ENCODE measurements at regions of chr3 and their contacts with region 1.

Region 1: DNA sequence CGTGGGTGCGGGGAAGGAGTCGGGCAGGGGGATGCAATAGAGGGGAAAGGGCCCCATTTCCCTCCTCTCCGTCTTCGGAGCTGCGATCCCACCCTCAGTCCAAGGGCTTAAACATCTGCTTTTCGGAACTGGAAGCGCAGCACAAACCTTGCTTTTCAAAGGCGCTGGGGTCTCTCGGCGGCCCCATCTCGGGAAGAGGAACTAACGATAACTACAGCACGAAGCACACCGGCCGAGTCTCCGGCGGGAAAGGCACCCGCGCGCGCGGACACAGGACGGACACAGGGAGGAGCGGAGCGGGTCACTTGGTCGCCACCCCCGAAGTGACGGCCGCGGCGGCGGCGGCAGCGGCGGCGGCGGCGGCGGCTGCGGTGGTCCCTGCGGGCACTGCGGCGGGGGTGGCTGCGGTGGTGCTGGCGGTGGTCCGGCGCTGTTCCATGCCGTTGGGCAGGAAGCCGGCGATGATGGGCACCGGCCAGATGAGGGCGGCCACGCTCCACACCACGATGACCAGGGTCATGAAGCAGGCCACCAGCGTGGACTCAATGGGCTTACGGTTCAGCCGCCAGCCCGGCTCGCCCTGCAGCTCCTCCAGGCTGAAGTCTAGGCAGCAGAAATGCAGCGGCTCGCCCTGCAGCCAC is 1.1 kb downstream of the TMEM158 start:
- DNase-seq: peak; percentile 75 to 89 (median 78)
- ATAC-seq: peak; percentile 84
- H3K4me3 ChIP-seq: peak overlapping the region; percentile 65
- H3K27ac ChIP-seq: peak overlapping the region; percentile 43; the same call in 2 of the 3 replicates
- H3K4me1 ChIP-seq: peaks cover 18 to 19% of the 10 kb centered on the region in 2 experiments; a peak in 4 of 5 replicates
- H3K27me3 ChIP-seq: peaks cover 9 to 23% of the 10 kb centered on the region in 2 experiments; a peak in 4 of 5 replicates
- CTCF ChIP-seq: peak; percentile 68 to 89 (median 89)
- EP300 ChIP-seq: no peak
- POLR2A ChIP-seq: no peak
- RAD21 ChIP-seq: peak; percentile 94 to 96

Region 2: GRCh38 chr3:45055411-45056143 is 169.4 kb before region 1 on chr3:
- CTCF ChIA-PET with region 1: no interaction called
- POLR2A ChIA-PET with region 1: no interaction called
- in situ Hi-C with region 1: no loop called
- intact Hi-C with region 1: no loop called
- DNase-seq: peak; percentile 58 to 89 (median 68)
- ATAC-seq: peak; percentile 82
- H3K4me3 ChIP-seq: no peak overlapping the region
- H3K27ac ChIP-seq: peak overlapping the region; percentile 32; the same call in 2 of the 3 replicates
- H3K4me1 ChIP-seq: peaks cover 21 to 74% of the 10 kb centered on the region in 2 experiments
- H3K27me3 ChIP-seq: no peaks in the 10 kb centered on the region
- CTCF ChIP-seq: peak; percentile 64 to 82 (median 73); a peak in 5 of 6 replicates
- EP300 ChIP-seq: no peak
- POLR2A ChIP-seq: no peak
- RAD21 ChIP-seq: peak; percentile 72 to 79

Region 3: GRCh38 chr3:45273681-45274515 is 49.0 kb after region 1 on chr3:
- CTCF ChIA-PET with region 1: no interaction called
- POLR2A ChIA-PET with region 1: interaction called, 4 read pairs
- in situ Hi-C with region 1: no loop called
- intact Hi-C with region 1: loop called (anchors 5 kb)
- DNase-seq: peak; percentile 79 to 96 (median 84)
- ATAC-seq: peak; percentile 93
- H3K4me3 ChIP-seq: no peak overlapping the region
- H3K27ac ChIP-seq: peak overlapping the region; percentile 93
- H3K4me1 ChIP-seq: peaks cover 25 to 50% of the 10 kb centered on the region in 2 experiments
- H3K27me3 ChIP-seq: no peaks in the 10 kb centered on the region
- CTCF ChIP-seq: peak in 1 of 3 experiments; percentile 9; a peak in 1 of 6 replicates
- EP300 ChIP-seq: peak; percentile 96
- POLR2A ChIP-seq: peak; percentile 68; the same call in 1 of the 2 replicates
- RAD21 ChIP-seq: peak; percentile 6 to 40; a peak in 2 of 4 replicates

Region 4: DNA sequence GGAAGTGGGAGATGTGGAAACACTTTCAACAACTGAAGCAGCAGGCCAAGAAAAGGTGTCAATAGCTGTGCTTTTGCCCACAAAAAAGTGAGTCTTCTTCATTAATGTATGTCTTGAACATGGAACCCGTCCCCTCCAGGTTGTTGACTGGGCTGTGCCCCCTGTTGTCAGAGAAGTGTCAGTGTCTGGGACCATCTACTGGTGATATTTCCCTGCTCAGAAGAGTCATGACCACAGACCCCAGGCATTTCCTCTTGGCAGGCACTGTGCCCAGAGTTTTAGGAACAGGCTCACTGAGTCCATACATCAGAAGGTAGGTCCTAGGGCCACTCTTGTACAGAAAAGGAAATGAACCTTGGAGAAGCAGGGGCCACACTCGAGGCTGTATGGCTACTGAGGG is 108.6 kb after region 1 on chr3:
- CTCF ChIA-PET with region 1: interaction called, 3 read pairs
- POLR2A ChIA-PET with region 1: interaction called, 3 read pairs
- in situ Hi-C with region 1: loop called (anchors 5 kb)
- intact Hi-C with region 1: loop called (anchors 1 kb)
- DNase-seq: peak in 2 of 4 experiments; percentile 41 to 49
- ATAC-seq: peak; percentile 81
- H3K4me3 ChIP-seq: no peak overlapping the region
- H3K27ac ChIP-seq: no peak overlapping the region
- H3K4me1 ChIP-seq: peaks cover 0 to 2% of the 10 kb centered on the region in 2 experiments; a peak in 2 of 5 replicates
- H3K27me3 ChIP-seq: peaks cover 47 to 72% of the 10 kb centered on the region in 2 experiments
- CTCF ChIP-seq: peak; percentile 49 to 62 (median 55)
- EP300 ChIP-seq: no peak
- POLR2A ChIP-seq: no peak
- RAD21 ChIP-seq: peak; percentile 24 to 63; a peak in 2 of 4 replicates

Region 5: GRCh38 chr3:45491344-45491743 is 266.4 kb after region 1 on chr3:
- CTCF ChIA-PET with region 1: no interaction called
- POLR2A ChIA-PET with region 1: no interaction called
- in situ Hi-C with region 1: loop called (anchors 5 kb)
- intact Hi-C with region 1: no loop called
- DNase-seq: no peak
- ATAC-seq: no peak
- H3K4me3 ChIP-seq: no peak overlapping the region
- H3K27ac ChIP-seq: no peak overlapping the region
- H3K4me1 ChIP-seq: no peaks in the 10 kb centered on the region
- H3K27me3 ChIP-seq: no peaks in the 10 kb centered on the region
- CTCF ChIP-seq: no peak
- EP300 ChIP-seq: no peak
- POLR2A ChIP-seq: no peak
- RAD21 ChIP-seq: no peak

Region 6: GRCh38 chr3:45499529-45499928 is 274.6 kb after region 1 on chr3:
- CTCF ChIA-PET with region 1: interaction called, 12 read pairs
- POLR2A ChIA-PET with region 1: interaction called, 3 read pairs
- in situ Hi-C with region 1: loop called (anchors 5 kb)
- intact Hi-C with region 1: loop called (anchors 2 kb)
- DNase-seq: peak in 1 of 4 experiments; percentile 20
- ATAC-seq: no peak
- H3K4me3 ChIP-seq: no peak overlapping the region
- H3K27ac ChIP-seq: no peak overlapping the region
- H3K4me1 ChIP-seq: no peaks in the 10 kb centered on the region
- H3K27me3 ChIP-seq: no peaks in the 10 kb centered on the region
- CTCF ChIP-seq: peak in 2 of 3 experiments; percentile 20 to 70; a peak in 4 of 6 replicates
- EP300 ChIP-seq: no peak
- POLR2A ChIP-seq: no peak
- RAD21 ChIP-seq: peak; percentile 66 to 67

Region 7: DNA sequence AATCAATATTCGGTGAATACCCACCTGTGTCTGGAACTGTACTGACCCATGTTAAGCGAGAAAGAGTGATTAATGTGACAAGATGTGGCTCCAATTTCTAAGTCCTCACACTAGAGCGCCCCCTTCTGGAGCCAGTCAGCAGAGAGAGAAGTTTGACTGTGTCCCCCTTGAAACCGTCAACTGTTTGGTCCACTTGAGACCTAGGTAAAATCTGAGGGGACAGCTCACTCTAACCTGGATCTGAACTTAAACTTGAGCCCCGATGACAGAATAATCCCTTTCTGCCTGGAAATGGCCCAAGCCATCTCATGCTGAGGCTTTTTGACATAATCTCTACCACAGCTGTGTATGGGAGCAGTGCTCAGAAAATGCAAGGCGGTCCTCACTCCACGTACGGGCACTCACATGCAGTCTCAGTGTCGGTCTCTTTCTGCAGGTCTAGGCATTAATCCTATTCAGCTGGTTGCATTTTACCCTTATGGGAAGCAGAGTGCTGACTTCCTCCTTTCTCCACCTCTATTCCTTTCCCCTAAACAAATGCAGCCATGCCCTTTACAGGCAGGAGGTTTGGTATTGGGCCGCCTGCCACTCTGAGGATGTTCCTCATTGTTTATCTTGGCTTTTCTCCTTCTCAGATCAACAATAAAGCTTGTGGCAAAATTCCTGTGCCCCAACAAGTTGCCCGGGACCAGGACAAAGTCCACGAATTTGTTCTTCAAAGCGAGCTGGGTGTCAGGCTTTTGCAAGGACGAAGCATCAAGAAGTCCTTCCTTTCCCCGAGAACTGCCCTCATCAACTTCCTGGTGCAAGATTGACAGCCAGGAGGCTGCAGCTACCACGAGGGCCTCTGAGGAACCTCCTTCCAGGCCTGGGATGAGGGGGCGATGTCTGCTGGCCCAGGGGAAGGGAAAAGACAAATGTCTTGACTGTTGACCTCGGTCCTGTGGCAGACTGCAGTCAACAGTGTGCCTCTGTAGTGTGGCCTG is 322.1 kb after region 1 on chr3:
- CTCF ChIA-PET with region 1: no interaction called
- POLR2A ChIA-PET with region 1: no interaction called
- in situ Hi-C with region 1: no loop called
- intact Hi-C with region 1: loop called (anchors 5 kb)
- DNase-seq: peak; percentile 74 to 86 (median 78)
- ATAC-seq: peak; percentile 52
- H3K4me3 ChIP-seq: no peak overlapping the region
- H3K27ac ChIP-seq: peak overlapping the region; percentile 74; the same call in 2 of the 3 replicates
- H3K4me1 ChIP-seq: peaks cover 25 to 51% of the 10 kb centered on the region in 2 experiments
- H3K27me3 ChIP-seq: no peaks in the 10 kb centered on the region
- CTCF ChIP-seq: peak; percentile 75 to 92 (median 85)
- EP300 ChIP-seq: no peak
- POLR2A ChIP-seq: no peak
- RAD21 ChIP-seq: peak in 1 of 2 experiments; percentile 66; a peak in 2 of 4 replicates

Region 8: DNA sequence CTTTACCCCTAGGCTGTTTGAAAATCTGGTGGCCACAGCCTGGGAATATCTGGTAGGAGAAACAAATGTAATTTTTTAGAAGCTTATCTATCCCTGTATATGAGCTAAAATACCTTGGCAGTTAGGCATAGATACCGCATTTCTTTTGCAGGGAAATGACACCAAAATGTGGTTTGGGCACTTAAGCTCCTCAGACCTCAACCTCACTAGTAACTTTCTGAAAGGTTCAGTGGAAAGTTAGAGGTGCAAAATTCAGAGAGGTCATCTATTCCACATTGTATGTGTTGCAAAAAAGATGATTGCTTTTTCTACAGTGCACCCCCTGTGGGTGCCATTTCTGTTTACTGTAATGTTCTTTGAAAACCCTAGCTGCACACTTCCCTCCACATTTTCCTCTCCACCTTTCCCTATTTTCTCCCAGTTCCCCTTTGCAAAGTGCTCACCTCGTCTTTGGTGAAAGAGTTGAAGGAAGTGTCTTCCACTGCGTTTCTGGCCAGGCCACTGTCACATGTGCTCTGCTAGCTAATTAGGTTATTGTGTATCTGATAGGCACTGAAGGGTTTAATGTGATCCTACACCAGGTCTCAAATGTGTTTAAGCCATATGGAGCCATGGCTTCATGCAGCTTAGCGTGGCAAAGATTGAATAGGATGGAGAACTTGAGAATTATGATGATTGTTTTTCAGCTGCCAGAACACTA is 465.5 kb after region 1 on chr3:
- CTCF ChIA-PET with region 1: no interaction called
- POLR2A ChIA-PET with region 1: no interaction called
- in situ Hi-C with region 1: no loop called
- intact Hi-C with region 1: no loop called
- DNase-seq: peak in 1 of 4 experiments; percentile 45
- ATAC-seq: no peak
- H3K4me3 ChIP-seq: peak overlapping the region; percentile 89
- H3K27ac ChIP-seq: peak overlapping the region; percentile 72
- H3K4me1 ChIP-seq: peaks cover 8 to 22% of the 10 kb centered on the region in 2 experiments; a peak in 3 of 5 replicates
- H3K27me3 ChIP-seq: no peaks in the 10 kb centered on the region
- CTCF ChIP-seq: peak in 2 of 3 experiments; percentile 4 to 19; a peak in 1 of 6 replicates
- EP300 ChIP-seq: no peak
- POLR2A ChIP-seq: no peak
- RAD21 ChIP-seq: no peak

Measured in K562 (cell line).